ENCODE measurements at regions of chr13 and their contacts with region 1.

Region 1: GRCh38 chr13:23871616-23872220 is 17.5 kb downstream of the MIPEP start:
- DNase-seq: no peak
- H3K4me3 ChIP-seq: no peak overlapping the region
- H3K27ac ChIP-seq: no peak overlapping the region
- H3K4me1 ChIP-seq: peaks cover 0 to 10% (median 3%) of the 10 kb centered on the region in 4 donors
- H3K27me3 ChIP-seq: no peaks in the 10 kb centered on the region
- CTCF ChIP-seq: peak; percentile 58 to 69 (median 64)
- EP300 ChIP-seq: no peak
- POLR2A ChIP-seq: no peak

Region 2: DNA sequence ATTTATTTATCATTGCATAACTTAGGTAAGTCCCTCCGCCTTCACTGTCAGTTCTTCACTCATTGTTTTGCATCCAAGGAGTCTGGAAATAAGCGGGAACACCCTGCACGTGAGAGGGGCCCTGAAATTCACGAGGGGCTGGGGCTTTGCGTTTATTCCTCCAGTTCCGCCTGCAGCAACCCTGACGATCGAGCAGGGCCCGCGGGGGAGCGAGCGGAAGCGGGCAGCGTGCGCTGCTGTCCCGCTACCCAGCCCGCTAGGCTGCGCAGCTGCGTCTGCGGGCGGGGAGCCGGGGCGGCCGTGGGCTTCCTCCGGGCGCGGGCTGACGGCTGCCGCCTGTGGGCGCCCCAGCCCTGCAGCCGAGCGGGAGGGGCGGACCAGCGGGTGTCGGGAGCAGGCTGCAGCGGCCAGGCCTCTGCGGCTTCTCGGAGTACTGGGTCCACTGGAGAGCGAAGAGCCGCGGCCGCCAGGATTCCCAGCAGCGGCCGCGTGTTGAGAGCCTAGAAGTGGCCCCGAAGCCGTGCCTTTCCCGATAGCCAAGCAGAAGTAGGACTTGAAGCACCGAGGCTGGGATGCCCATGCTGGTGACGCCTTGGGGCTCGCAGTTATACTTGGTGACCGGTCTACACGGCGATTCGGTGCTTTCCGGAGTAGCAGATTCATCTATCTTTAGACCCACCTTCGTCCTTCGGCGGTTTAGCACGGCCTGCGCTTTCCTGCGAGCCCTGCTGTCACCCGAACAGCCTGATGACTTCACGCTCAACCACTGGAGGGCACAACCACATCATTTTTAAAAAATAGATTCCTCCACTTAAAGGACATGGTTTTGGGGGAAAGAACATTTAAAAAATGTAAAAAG is 405.3 kb before region 1 on chr13:
- intact Hi-C with region 1: loop called (anchors 2 kb)
- DNase-seq: peak; percentile 92
- H3K4me3 ChIP-seq: peak overlapping the region; percentile 57 to 69 (median 60)
- H3K27ac ChIP-seq: peak overlapping the region; percentile 74 to 89 (median 86)
- H3K4me1 ChIP-seq: peaks cover 5 to 47% (median 37%) of the 10 kb centered on the region in 4 donors
- H3K27me3 ChIP-seq: no peaks in the 10 kb centered on the region
- CTCF ChIP-seq: peak; percentile 45 to 67 (median 64)
- EP300 ChIP-seq: no peak
- POLR2A ChIP-seq: no peak

Region 3: GRCh38 chr13:23579072-23579895 is 292.4 kb before region 1 on chr13:
- intact Hi-C with region 1: loop called (anchors 5 kb)
- DNase-seq: peak; percentile 96
- H3K4me3 ChIP-seq: peak overlapping the region; percentile 85 to 97 (median 92)
- H3K27ac ChIP-seq: peak overlapping the region; percentile 85 to 95 (median 88)
- H3K4me1 ChIP-seq: peaks cover 0 to 31% (median 19%) of the 10 kb centered on the region in 4 donors
- H3K27me3 ChIP-seq: peaks cover 0 to 3% (median 0%) of the 10 kb centered on the region in 4 donors
- CTCF ChIP-seq: no peak
- EP300 ChIP-seq: no peak
- POLR2A ChIP-seq: no peak

Region 4: DNA sequence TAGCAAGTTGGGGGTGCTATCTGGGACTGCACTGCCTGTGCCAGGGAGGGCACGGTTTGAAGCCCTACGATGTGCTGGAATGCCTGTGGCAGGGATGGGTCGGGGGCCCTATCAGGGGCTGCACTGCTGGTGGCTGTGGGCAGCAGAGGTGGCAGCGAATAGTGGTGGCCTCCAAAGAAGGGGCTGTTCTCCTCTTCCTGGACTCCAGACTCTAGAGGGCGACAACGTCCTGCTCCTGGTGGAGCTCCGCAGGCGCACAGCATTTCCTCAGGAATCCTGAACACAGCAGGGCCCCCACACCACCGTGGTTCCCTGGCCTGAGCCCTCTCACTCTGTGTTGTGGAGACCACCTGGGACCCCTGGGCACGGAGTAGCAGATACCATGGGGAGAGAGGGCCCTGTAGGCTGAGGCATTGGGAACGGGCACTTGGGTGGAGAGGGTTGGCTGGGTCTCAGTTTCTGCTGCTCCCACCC is 155.9 kb before region 1 on chr13:
- intact Hi-C with region 1: loop called (anchors 10 kb)
- DNase-seq: no peak
- H3K4me3 ChIP-seq: no peak overlapping the region
- H3K27ac ChIP-seq: no peak overlapping the region
- H3K4me1 ChIP-seq: peaks cover 0 to 3% (median 0%) of the 10 kb centered on the region in 4 donors
- H3K27me3 ChIP-seq: no peaks in the 10 kb centered on the region
- CTCF ChIP-seq: peak in 2 of 3 experiments; percentile 6 to 43
- EP300 ChIP-seq: no peak
- POLR2A ChIP-seq: no peak

Region 5: DNA sequence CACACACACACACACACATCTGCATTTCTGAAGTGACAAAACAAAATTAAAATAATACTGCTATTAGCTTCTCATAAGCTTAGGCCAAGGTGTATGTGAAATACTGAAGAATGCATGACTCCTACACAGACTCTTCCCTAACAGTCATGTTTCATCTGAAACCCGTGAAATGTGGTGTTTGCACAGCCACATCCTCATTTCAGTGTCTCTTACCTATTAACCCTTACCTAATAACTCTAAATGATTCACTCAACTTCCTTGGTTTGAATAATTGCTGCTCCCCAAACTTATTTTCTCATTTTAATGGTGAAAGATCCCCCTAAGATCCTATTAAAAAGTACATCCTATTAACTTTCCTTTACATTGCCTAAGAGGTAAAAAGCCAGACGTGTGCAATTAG is 100.2 kb before region 1 on chr13:
- intact Hi-C with region 1: no loop called
- DNase-seq: no peak
- H3K4me3 ChIP-seq: no peak overlapping the region
- H3K27ac ChIP-seq: no peak overlapping the region
- H3K4me1 ChIP-seq: no peaks in the 10 kb centered on the region
- H3K27me3 ChIP-seq: no peaks in the 10 kb centered on the region
- CTCF ChIP-seq: no peak
- EP300 ChIP-seq: no peak
- POLR2A ChIP-seq: no peak

Measured in esophagus muscularis mucosa (tissue), 4 donors.